Posterior vena cava (tissue), 2 donors: ENCODE measurements at regions of chr11 and their contacts with region 1.

Region 1: GRCh38 chr11:12456651-12457579 is 79.5 kb downstream of the PARVA start:
- DNase-seq: no peak

Region 2: GRCh38 chr11:11899401-11899800 is 557.5 kb before region 1 on chr11:
- intact Hi-C with region 1: no loop called
- DNase-seq: no peak

Region 3: GRCh38 chr11:11909727-11910126 is 547.2 kb before region 1 on chr11:
- intact Hi-C with region 1: no loop called
- DNase-seq: no peak

Region 4: DNA sequence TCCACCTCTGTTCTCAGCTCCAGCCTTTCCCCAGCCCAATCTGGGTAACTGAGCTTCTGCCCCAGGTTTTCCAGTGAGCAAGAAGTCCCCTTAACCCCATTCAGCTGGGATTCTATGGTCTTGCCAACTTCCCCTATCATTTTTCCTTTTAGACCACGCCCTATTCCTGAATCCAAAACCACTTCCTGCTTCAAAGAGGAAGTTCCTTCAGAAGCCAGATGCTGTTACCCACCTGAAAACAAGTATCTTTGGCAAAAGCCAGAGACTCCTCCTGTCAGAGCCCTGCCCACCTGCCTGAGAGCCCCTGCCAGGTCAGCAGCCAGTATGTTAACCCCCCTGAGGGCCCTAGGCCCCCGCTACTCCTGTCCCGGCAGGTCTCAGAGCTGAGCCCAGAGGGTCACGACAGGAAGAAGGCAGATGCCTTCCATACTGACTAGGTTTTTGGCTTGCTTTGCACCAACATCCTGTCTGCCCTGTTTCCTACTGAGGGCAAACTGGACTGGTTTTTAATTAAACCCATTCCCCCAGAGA is 366.8 kb before region 1 on chr11:
- intact Hi-C with region 1: no loop called
- DNase-seq: no peak

Region 5: DNA sequence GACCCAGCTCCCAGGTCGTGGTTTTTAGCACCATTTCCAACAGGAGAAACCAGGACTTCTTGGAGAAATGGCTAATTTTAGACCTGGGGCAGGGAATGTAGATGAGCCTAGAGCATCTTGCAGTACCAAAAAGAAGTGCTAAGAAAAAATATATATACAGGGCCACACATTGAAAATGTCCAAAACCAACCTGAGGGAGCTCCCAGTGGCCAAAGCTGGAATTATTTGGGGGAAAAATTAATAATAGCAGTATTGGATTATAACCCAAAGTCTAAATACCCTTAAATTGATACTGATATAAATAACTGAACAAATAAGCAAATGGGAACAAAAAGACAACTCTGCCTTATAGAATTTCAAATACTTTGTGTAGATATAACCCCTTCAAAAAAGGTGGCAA is 28.4 kb after region 1 on chr11:
- intact Hi-C with region 1: loop called in 1 of 2 experiments (anchors 1 kb)
- DNase-seq: no peak

Region 6: DNA sequence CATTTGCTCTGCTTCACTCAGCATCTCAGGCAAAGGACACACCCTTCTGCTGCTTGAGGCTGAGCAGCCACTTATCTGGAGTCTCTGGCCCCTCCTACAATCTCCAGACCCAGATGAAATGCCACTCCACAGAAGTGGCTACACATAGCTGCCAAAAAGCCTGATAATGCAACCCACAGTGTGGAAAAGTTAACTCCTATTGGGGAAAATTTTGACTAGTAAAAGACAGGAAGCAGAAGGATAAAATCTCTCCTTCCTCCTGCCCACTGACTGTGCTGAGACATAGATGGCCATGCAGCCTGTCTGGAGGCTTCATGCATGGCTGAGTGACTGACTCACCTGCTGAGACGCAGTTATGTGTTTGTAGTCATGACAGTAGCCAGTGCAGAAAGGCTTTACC is 125.0 kb after region 1 on chr11:
- intact Hi-C with region 1: no loop called
- DNase-seq: no peak